ENCODE measurements at regions of chr6 and their contacts with region 1.

Region 1: DNA sequence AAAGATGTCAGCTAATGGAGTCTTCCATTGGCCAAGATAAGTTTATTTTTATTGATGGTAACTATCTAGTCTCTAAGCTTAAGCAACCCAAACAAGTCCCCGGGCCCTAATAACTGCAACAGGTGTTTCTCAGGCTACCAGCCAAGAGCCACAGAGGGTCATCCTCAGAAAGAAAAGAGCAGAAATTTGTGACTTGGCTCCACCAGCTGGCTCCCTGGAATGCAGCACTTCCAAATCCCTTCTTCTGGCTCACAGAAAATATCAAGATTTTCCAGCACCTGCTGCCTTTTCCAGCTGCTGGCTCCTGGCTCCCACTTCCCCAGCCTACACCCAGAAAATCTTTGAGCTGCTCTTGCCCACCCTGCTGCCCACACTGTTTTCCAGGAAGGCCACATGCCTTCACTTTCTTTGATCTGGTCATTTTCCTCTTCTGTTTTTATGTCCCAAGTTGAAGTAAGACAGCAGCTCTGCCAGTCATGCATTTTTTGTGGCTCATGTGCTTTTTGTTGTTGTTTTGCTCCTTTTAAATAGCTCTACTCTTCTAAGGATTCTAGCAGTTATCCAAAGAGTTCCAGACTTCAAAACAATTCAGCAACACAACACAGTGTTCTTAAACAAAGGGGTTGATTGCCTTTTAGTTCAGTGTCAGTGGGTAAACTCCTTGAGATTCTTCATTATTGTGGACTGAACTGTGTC is 151.0 kb upstream of the SMLR1 start:
- DNase-seq: no peak
- H3K4me3 ChIP-seq: no peak overlapping the region
- H3K27ac ChIP-seq: peak overlapping the region; percentile 40
- H3K4me1 ChIP-seq: peaks cover 19% of the 10 kb centered on the region
- H3K27me3 ChIP-seq: no peaks in the 10 kb centered on the region
- CTCF ChIP-seq: no peak
- POLR2A ChIP-seq: no peak

Region 2: GRCh38 chr6:130602151-130602770 is 74.0 kb before region 1 on chr6:
- intact Hi-C with region 1: loop called (anchors 10 kb)
- DNase-seq: no peak
- H3K4me3 ChIP-seq: no peak overlapping the region
- H3K27ac ChIP-seq: no peak overlapping the region
- H3K4me1 ChIP-seq: peaks cover 15% of the 10 kb centered on the region
- H3K27me3 ChIP-seq: no peaks in the 10 kb centered on the region
- CTCF ChIP-seq: no peak
- POLR2A ChIP-seq: no peak